ENCODE measurements at regions of chr6 and their contacts with region 1.

Region 1: DNA sequence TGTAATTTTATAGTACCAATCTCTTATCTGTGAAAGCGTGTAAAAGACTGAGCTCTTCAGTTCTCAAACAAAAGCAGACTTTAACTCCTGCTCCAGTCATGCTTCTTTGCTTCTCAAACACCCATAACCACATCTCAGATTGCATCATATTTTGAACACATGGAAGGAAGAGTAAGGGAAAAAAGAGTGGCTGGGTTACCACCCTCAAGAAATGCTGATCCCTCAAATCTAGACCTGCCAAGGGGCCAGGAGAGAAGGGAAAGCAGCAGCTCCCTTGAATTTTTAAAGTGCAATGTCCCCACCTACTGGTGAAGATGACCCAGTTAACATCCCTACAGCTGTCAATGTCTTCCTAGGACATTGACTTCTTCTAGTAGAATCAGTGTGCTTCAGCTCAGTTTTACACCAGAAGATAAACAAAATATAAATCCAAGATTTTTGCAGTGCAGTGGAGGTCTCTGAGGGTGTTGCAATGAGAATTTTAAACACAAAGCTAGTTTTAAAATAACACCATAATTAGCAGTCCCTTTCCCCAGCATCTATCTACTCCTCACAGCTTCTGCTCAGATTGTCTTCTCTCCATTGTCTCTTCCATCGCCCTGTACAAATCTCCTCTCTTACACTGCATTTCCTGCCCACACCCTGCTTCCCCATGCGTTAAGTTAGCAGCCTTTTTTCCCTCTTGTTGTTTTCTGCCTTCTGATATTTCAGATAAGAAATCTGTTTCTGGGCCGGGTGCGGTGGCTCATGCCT is 22.6 kb upstream of the HLA-DQB2 start:
- DNase-seq: peak; percentile 77
- ATAC-seq: no peak
- H3K4me3 ChIP-seq: no peak overlapping the region
- H3K4me3 Mint-ChIP-seq: no peak overlapping the region
- H3K27ac ChIP-seq: no peak overlapping the region
- H3K27ac Mint-ChIP-seq: no peak overlapping the region
- H3K4me1 ChIP-seq: no peaks in the 10 kb centered on the region
- H3K4me1 Mint-ChIP-seq: peaks cover 2% of the 10 kb centered on the region
- H3K27me3 ChIP-seq: no peaks in the 10 kb centered on the region
- H3K27me3 Mint-ChIP-seq: no peaks in the 10 kb centered on the region
- CTCF ChIP-seq: peak; percentile 82

Region 2: DNA sequence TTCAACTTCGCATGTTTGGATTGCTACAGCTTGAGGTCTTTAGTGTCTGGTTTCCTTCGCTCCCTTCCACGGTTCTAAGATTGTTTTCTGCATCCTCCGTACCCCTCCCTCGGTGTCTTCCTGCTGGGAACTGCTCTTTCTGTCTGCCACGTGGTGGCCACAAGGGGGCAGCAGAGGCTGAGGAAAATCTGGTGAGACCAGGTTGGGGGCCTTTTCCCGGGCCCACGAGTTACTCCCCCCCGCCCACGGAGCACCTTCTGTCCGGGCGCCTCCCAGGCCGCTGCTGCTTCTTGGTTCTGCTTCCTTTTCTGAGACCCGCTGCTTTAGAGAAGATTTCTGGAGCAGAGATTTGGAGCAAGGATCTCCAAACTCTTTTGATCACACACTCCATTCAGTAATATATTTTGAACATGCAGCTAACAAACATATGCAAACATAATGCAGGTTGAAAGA is 541.0 kb before region 1 on chr6:
- CTCF ChIA-PET with region 1: interaction called, 39 read pairs
- POLR2A ChIA-PET with region 1: no interaction called
- intact Hi-C with region 1: no loop called
- DNase-seq: peak; percentile 87
- ATAC-seq: peak; percentile 93
- H3K4me3 ChIP-seq: peak overlapping the region in 3 of 5 experiments; percentile 8 to 40 (median 24)
- H3K4me3 Mint-ChIP-seq: peak overlapping the region; percentile 76
- H3K27ac ChIP-seq: no peak overlapping the region
- H3K27ac Mint-ChIP-seq: peak overlapping the region; percentile 33
- H3K4me1 ChIP-seq: peaks cover 8 to 16% of the 10 kb centered on the region in 2 donors
- H3K4me1 Mint-ChIP-seq: peaks cover 15% of the 10 kb centered on the region
- H3K27me3 ChIP-seq: no peaks in the 10 kb centered on the region
- H3K27me3 Mint-ChIP-seq: no peaks in the 10 kb centered on the region
- CTCF ChIP-seq: peak; percentile 90

Region 3: DNA sequence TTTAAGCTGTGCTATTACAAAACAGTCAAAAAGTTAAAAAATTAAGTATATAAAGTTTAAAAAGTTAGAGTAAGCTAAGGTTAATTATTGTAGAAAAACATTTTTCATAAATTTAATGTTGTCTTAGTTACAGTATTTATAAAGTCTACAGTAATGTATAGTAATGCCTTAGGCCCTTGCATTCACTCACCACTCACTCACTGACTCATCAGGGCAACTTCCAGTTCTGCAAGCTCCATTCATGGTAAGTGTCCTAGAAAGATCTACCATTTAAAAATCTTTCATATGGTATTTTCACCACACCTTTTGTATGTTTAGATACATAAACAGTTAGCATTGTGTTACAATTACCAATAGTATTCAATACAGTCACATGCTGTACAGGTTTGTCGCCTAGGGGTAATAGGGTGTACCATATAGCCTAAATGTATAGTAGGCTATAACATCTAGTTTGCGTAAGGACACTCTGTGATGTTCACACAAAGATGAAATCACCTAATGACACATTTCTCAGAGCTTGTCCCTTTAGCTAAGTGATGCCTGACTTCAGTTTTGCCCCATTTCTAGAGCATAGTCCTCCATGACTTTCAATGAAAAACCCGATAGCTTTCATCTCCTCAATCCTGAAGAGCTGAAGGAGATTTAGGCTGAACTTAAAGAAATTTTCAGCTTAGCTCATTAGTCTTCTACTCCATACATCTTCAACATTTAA is 361.2 kb before region 1 on chr6:
- CTCF ChIA-PET with region 1: interaction called, 229 read pairs
- POLR2A ChIA-PET with region 1: no interaction called
- intact Hi-C with region 1: no loop called
- DNase-seq: no peak
- ATAC-seq: no peak
- H3K4me3 ChIP-seq: no peak overlapping the region
- H3K4me3 Mint-ChIP-seq: no peak overlapping the region
- H3K27ac ChIP-seq: no peak overlapping the region
- H3K27ac Mint-ChIP-seq: no peak overlapping the region
- H3K4me1 ChIP-seq: no peaks in the 10 kb centered on the region
- H3K4me1 Mint-ChIP-seq: no peaks in the 10 kb centered on the region
- H3K27me3 ChIP-seq: peaks cover 0 to 2% (median under 1%) of the 10 kb centered on the region in 4 experiments
- H3K27me3 Mint-ChIP-seq: peaks cover 13% of the 10 kb centered on the region
- CTCF ChIP-seq: no peak

Region 4: DNA sequence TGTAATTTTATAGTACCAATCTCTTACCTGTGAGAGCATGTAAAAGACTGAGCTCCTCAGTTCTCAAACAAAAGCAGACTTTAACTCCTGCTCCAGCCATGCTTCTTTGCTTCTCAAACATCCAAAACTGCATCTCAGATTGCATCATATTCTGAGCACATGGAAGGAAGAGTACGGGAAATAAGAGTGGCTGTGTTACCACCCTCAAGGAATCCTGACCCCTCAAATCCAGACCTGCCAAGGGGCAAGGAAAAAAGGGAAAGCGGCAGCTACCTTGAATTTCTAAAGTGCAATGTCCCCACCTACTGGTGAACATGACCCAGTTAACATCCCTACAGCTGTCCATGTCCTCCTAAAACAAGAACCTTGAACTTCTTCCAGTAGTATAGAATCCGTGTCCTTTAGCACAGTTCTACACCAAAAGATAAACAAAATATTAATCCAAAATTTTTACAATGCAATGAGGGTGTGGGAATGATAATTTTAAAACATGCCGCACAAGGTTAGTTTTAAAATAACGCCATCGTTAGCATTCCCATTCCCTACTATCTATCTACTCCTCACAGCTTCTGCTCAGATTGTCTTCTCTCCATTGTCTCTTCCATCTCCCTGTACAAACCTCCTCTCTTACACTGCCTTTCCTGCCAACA is 85.4 kb before region 1 on chr6:
- CTCF ChIA-PET with region 1: interaction called, 46 read pairs
- POLR2A ChIA-PET with region 1: no interaction called
- intact Hi-C with region 1: loop called (anchors 5 kb)
- DNase-seq: peak; percentile 79
- ATAC-seq: peak; percentile 71
- H3K4me3 ChIP-seq: peak overlapping the region in 3 of 5 experiments; percentile 13 to 38 (median 27)
- H3K4me3 Mint-ChIP-seq: peak overlapping the region; percentile 84
- H3K27ac ChIP-seq: no peak overlapping the region
- H3K27ac Mint-ChIP-seq: peak overlapping the region; percentile 85
- H3K4me1 ChIP-seq: peaks cover 0 to 4% of the 10 kb centered on the region in 2 donors
- H3K4me1 Mint-ChIP-seq: peaks cover 18% of the 10 kb centered on the region
- H3K27me3 ChIP-seq: peaks cover 0 to 6% (median 4%) of the 10 kb centered on the region in 4 experiments
- H3K27me3 Mint-ChIP-seq: peaks cover 3% of the 10 kb centered on the region
- CTCF ChIP-seq: peak; percentile 64

Region 5: DNA sequence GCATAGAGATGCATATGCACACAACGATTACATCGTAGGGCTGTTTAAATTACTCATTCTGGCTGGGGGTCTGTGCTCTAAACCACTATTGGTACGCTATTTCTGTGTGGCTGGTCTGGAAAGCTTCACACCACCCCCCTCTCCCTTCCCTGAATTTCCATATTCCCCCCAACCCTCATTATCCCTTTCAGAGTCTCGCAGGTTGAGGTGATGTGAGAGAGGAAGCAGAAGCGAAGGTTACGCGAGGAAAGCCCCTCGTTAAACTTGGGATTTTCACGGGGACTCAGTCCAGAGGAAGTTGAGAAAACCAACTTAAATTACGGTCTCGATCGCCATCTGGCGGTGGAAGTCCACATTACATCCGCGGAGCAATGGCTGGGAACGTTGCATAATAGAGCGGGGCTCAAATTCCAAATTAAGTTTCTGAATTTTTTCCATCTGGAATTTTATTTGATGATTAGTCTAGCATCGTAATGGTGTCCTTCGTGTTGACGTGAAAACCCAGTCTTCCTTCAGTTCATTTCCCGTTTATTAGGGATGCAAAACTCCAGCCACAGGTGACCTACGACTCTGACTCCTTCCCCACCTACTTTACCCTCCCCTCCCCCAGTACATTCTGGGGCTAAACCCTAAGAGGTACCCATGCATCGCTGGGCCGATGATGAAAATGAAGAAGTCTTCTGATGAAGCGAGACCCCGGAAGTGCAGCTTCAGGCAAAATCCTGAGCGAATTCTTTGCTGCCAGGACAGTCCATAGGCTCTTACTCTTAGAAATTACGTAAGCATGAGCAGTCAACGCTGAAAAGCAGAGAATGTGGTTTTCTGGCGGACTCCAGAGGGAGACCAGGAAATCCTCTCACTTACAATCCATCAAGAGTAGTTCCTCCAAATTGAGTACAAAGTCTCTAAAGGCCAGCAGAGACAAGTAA is 11.2 kb after region 1 on chr6:
- CTCF ChIA-PET with region 1: interaction called, 37 read pairs
- POLR2A ChIA-PET with region 1: no interaction called
- intact Hi-C with region 1: no loop called
- DNase-seq: peak; percentile 92
- ATAC-seq: peak; percentile 83
- H3K4me3 ChIP-seq: peak overlapping the region in 4 of 5 experiments; percentile 26 to 53 (median 42)
- H3K4me3 Mint-ChIP-seq: peak overlapping the region; percentile 90
- H3K27ac ChIP-seq: peak overlapping the region; percentile 60 to 64
- H3K27ac Mint-ChIP-seq: peak overlapping the region; percentile 93
- H3K4me1 ChIP-seq: peaks cover 26 to 32% of the 10 kb centered on the region in 2 donors
- H3K4me1 Mint-ChIP-seq: peaks cover 40% of the 10 kb centered on the region
- H3K27me3 ChIP-seq: no peaks in the 10 kb centered on the region
- H3K27me3 Mint-ChIP-seq: no peaks in the 10 kb centered on the region
- CTCF ChIP-seq: peak; percentile 91

Measured in B cell (primary cell).